ENCODE measurements at regions of chrX and their contacts with region 1.

Region 1: GRCh38 chrX:15645258-15645657 is 19.3 kb downstream of the CLTRN start:
- DNase-seq: no peak
- H3K4me3 Mint-ChIP-seq: no peak overlapping the region
- H3K27ac Mint-ChIP-seq: no peak overlapping the region
- H3K4me1 Mint-ChIP-seq: peaks cover 15% of the 10 kb centered on the region
- H3K27me3 Mint-ChIP-seq: peaks cover 2% of the 10 kb centered on the region

Region 2: GRCh38 chrX:15493118-15493962 is 151.9 kb before region 1 on chrX and contains the start of gene PIR:
- CTCF ChIA-PET with region 1: no interaction called
- POLR2A ChIA-PET with region 1: no interaction called
- intact Hi-C with region 1: loop called (anchors 10 kb)
- DNase-seq: peak; percentile 80
- H3K4me3 Mint-ChIP-seq: peak within 1 kb of the TSS; percentile 79
- H3K27ac Mint-ChIP-seq: peak within 1 kb of the TSS; percentile 31
- H3K4me1 Mint-ChIP-seq: peaks cover 4% of the 10 kb centered on the region
- H3K27me3 Mint-ChIP-seq: no peaks in the 10 kb centered on the region
- total RNA-seq, gene PIR: 2.4 to 3.1 TPM

Region 3: DNA sequence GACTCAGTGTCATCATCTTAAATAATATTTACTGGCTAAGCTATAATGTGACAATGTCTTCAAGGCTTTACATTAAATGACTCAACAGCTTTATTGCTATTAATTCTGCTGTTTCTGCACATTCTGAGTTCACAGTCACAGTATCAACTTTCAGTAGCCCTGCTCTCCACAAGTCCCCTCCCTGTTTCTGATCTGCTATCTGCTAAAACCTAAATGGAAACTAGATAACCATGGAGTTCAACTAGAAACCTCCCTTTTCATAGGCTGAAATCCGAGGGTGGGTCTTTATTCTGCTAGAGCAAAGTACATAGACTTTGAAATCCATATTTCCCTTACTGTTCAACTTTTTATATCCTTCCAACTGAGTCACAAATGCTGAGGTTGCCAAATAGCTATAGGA is 39.1 kb before region 1 on chrX:
- CTCF ChIA-PET with region 1: no interaction called
- POLR2A ChIA-PET with region 1: no interaction called
- intact Hi-C with region 1: no loop called
- DNase-seq: no peak
- H3K4me3 Mint-ChIP-seq: no peak overlapping the region
- H3K27ac Mint-ChIP-seq: no peak overlapping the region
- H3K4me1 Mint-ChIP-seq: no peaks in the 10 kb centered on the region
- H3K27me3 Mint-ChIP-seq: peaks cover 6% of the 10 kb centered on the region